ENCODE measurements at regions of chr3 and their contacts with region 1.

Region 1: DNA sequence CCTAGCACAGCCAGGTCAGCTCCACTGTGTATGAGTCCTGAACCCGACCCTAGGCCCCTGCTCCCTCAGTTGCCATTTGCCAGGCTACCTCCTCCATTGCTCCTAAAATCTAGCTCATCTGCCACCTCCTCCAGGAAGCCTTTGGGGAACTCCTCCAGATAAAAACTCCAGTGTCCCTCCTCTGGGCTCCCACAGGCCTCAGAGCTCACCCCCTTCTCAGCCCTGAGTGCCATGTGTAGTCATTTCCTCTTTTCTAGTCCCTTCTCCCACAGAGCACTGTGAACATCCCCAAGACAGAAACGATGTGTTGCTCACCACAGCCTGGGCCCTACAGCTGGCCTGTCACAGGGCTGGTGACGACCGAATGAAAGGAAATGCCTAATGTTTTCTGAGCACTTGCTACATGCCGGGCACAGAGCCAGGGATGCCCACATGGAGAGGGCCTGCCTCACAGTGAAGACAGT is 61.0 kb downstream of the IQSEC1 start:
- DNase-seq: peak; percentile 84
- ATAC-seq: peak; percentile 58
- H3K4me3 ChIP-seq: peak overlapping the region; percentile 39; the same call in 1 of the 2 replicates
- H3K27ac ChIP-seq: peak overlapping the region; percentile 99
- H3K4me1 ChIP-seq: peaks cover 94% of the 10 kb centered on the region
- H3K27me3 ChIP-seq: no peaks in the 10 kb centered on the region
- CTCF ChIP-seq: no peak
- EP300 ChIP-seq: peak; percentile 51 to 58; a peak in 2 of 4 replicates
- POLR2A ChIP-seq: no peak
- RAD21 ChIP-seq: no peak

Region 2: GRCh38 chr3:12916159-12916558 is 96.1 kb before region 1 on chr3:
- CTCF ChIA-PET with region 1: no interaction called
- POLR2A ChIA-PET with region 1: no interaction called
- RAD21 ChIA-PET with region 1: no interaction called
- SMC1A ChIA-PET with region 1: no interaction called
- in situ Hi-C with region 1: no loop called
- intact Hi-C with region 1: no loop called
- DNase-seq: no peak
- ATAC-seq: peak; percentile 53
- H3K4me3 ChIP-seq: no peak overlapping the region
- H3K27ac ChIP-seq: no peak overlapping the region
- H3K4me1 ChIP-seq: peaks cover 9% of the 10 kb centered on the region
- H3K27me3 ChIP-seq: no peaks in the 10 kb centered on the region
- CTCF ChIP-seq: no peak
- EP300 ChIP-seq: no peak
- POLR2A ChIP-seq: peak; percentile 33; the same call in 1 of the 2 replicates
- RAD21 ChIP-seq: no peak

Region 3: GRCh38 chr3:12984023-12984823 is 28.0 kb before region 1 on chr3:
- CTCF ChIA-PET with region 1: interaction called, 14 read pairs
- POLR2A ChIA-PET with region 1: interaction called, 10 read pairs
- RAD21 ChIA-PET with region 1: interaction called, 7 read pairs
- SMC1A ChIA-PET with region 1: interaction called, 4 read pairs
- in situ Hi-C with region 1: no loop called
- intact Hi-C with region 1: no loop called
- DNase-seq: no peak
- ATAC-seq: peak; percentile 90
- H3K4me3 ChIP-seq: no peak overlapping the region
- H3K27ac ChIP-seq: no peak overlapping the region
- H3K4me1 ChIP-seq: peaks cover 32% of the 10 kb centered on the region
- H3K27me3 ChIP-seq: no peaks in the 10 kb centered on the region
- CTCF ChIP-seq: peak; percentile 64 to 79 (median 69)
- EP300 ChIP-seq: no peak
- POLR2A ChIP-seq: no peak
- RAD21 ChIP-seq: peak; percentile 72

Region 4: DNA sequence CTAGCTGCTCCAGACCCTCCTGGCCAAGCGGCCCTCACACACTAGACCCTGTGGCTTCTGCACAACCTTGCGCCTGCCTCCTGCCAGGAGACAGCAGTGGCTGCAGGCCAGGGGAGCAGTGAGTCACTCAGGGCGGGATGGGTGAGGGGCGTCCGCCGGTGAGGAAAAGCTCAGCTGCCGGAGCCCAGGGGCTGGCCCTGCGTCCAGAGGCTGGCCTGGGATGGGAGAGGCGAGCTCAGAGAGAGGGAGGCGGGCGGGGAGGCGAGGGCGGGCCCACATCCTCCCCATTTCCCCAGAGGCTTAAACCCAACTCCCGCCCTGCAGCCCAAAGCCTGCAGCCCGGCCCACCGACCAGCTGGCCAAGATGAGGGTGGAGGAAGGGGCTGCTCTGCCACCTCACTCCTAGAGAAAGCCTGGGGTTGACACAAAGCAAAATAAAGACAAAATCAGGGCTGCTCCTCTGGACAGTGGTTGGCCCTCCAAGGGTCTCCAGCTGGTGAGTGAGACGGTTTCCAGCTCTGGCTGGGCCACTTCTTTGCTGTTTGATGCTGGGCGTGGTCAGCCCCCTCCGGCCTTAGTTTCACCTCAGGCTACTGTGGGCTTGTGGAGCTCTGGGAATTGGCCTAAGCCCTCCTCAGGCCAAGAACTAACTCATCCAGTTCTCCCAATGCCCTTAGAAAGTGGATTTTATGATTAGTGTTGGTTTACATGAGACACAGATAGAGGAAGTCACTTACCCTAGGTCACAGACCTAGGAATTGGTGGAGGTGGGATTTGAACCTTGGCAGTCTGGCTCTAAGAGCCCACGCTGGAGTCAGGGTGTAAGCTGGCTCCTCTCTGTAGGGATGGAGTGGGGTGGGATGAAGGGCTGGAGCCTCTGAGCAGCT is 10.3 kb after region 1 on chr3:
- CTCF ChIA-PET with region 1: interaction called, 17 read pairs
- POLR2A ChIA-PET with region 1: interaction called, 170 read pairs
- RAD21 ChIA-PET with region 1: interaction called, 89 read pairs
- SMC1A ChIA-PET with region 1: interaction called, 123 read pairs
- in situ Hi-C with region 1: no loop called
- intact Hi-C with region 1: no loop called
- DNase-seq: no peak
- ATAC-seq: peak; percentile 72
- H3K4me3 ChIP-seq: peak overlapping the region; percentile 70
- H3K27ac ChIP-seq: peak overlapping the region; percentile 99
- H3K4me1 ChIP-seq: peaks cover 32% of the 10 kb centered on the region
- H3K27me3 ChIP-seq: no peaks in the 10 kb centered on the region
- CTCF ChIP-seq: no peak
- EP300 ChIP-seq: no peak
- POLR2A ChIP-seq: no peak
- RAD21 ChIP-seq: no peak

Region 5: GRCh38 chr3:13045904-13046568 is 33.8 kb after region 1 on chr3:
- CTCF ChIA-PET with region 1: interaction called, 56 read pairs
- POLR2A ChIA-PET with region 1: interaction called, 84 read pairs
- RAD21 ChIA-PET with region 1: interaction called, 93 read pairs
- SMC1A ChIA-PET with region 1: interaction called, 71 read pairs
- in situ Hi-C with region 1: no loop called
- intact Hi-C with region 1: loop called (anchors 1 kb)
- DNase-seq: peak; percentile 76
- ATAC-seq: peak; percentile 87
- H3K4me3 ChIP-seq: no peak overlapping the region
- H3K27ac ChIP-seq: peak overlapping the region; percentile 70
- H3K4me1 ChIP-seq: peaks cover 34% of the 10 kb centered on the region
- H3K27me3 ChIP-seq: no peaks in the 10 kb centered on the region
- CTCF ChIP-seq: 0 out of 6 replicates have a peak, but pooled peaks of 1 of the 3 experiments have one; percentile 9
- EP300 ChIP-seq: peak; percentile 40 to 54; a peak in 2 of 4 replicates
- POLR2A ChIP-seq: peak; percentile 70
- RAD21 ChIP-seq: no peak

Region 6: DNA sequence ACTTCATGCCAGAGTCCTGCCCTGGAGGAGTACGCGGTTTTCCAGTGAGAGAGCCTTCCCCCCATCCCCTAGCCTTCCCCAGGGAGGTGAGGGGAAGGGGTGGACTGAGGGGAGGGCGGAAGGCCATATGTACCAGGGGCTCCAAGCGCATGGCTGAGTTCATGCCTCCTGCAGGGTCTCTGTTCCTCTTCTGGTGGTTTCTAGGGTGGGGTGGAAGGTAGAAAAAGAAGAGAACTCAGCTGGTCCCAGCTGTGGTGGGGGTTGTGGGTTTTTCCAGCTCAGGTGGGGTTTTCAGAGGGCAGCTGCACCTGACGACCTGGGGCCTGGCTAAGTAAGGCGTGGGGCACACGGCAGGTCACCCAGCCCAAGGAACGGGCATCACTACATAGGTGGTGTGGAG is 71.6 kb after region 1 on chr3:
- CTCF ChIA-PET with region 1: interaction called, 3 read pairs
- POLR2A ChIA-PET with region 1: interaction called, 4 read pairs
- RAD21 ChIA-PET with region 1: interaction called, 6 read pairs
- SMC1A ChIA-PET with region 1: interaction called, 6 read pairs
- in situ Hi-C with region 1: no loop called
- intact Hi-C with region 1: loop called (anchors 2 kb)
- DNase-seq: peak; percentile 31
- ATAC-seq: peak; percentile 72
- H3K4me3 ChIP-seq: no peak overlapping the region
- H3K27ac ChIP-seq: 0 out of 2 replicates have a peak overlapping the region, but pooled peaks have one; percentile 22
- H3K4me1 ChIP-seq: peaks cover 52% of the 10 kb centered on the region
- H3K27me3 ChIP-seq: no peaks in the 10 kb centered on the region
- CTCF ChIP-seq: no peak
- EP300 ChIP-seq: no peak
- POLR2A ChIP-seq: no peak
- RAD21 ChIP-seq: no peak

Region 7: GRCh38 chr3:13648060-13649001 is 636.1 kb after region 1 on chr3:
- CTCF ChIA-PET with region 1: no interaction called
- POLR2A ChIA-PET with region 1: no interaction called
- RAD21 ChIA-PET with region 1: no interaction called
- SMC1A ChIA-PET with region 1: no interaction called
- in situ Hi-C with region 1: no loop called
- intact Hi-C with region 1: no loop called
- DNase-seq: no peak
- ATAC-seq: peak; percentile 88
- H3K4me3 ChIP-seq: no peak overlapping the region
- H3K27ac ChIP-seq: no peak overlapping the region
- H3K4me1 ChIP-seq: no peaks in the 10 kb centered on the region
- H3K27me3 ChIP-seq: peaks cover 2 to 6% of the 10 kb centered on the region in 2 experiments; a peak in 2 of 4 replicates
- CTCF ChIP-seq: peak; percentile 97 to 99 (median 98)
- EP300 ChIP-seq: no peak
- POLR2A ChIP-seq: no peak
- RAD21 ChIP-seq: peak; percentile 92